ENCODE measurements at regions of chr4 and their contacts with region 1.

Region 1: DNA sequence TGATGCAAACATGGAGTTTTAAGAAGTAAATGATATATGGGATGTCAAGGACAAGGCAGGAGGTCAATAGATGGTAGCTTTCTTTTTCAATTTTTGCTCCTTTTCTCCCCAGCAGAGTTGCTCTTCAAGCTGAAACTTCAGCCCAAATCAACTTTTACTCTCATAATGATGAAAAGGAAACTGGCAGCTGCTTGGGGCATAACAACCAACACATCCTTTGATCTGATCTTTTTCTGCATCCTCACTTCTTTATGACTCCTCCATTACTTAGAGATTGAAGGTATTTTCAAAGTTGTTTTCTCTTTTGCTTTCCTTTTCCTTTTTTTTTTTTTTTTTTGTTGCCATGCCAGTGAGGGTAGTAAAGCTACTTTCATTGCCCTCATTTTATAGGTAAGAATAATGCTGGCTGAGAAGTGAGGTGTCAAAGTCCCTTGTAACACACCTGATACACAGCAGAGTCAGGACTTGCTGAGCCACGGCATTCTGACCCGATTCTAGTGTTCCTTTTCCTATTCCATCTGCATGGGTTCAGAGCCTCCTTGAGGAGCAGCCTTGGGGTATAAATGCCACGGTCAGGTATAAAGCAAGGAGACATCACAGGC is 26.9 kb downstream of the SLC2A9 start:
- DNase-seq: no peak
- ATAC-seq: no peak
- H3K4me3 ChIP-seq: no peak overlapping the region
- H3K27ac ChIP-seq: no peak overlapping the region
- H3K4me1 ChIP-seq: peaks cover 0 to 9% (median 0%) of the 10 kb centered on the region in 9 donors
- H3K27me3 ChIP-seq: no peaks in the 10 kb centered on the region
- CTCF ChIP-seq: no peak

Region 2: DNA sequence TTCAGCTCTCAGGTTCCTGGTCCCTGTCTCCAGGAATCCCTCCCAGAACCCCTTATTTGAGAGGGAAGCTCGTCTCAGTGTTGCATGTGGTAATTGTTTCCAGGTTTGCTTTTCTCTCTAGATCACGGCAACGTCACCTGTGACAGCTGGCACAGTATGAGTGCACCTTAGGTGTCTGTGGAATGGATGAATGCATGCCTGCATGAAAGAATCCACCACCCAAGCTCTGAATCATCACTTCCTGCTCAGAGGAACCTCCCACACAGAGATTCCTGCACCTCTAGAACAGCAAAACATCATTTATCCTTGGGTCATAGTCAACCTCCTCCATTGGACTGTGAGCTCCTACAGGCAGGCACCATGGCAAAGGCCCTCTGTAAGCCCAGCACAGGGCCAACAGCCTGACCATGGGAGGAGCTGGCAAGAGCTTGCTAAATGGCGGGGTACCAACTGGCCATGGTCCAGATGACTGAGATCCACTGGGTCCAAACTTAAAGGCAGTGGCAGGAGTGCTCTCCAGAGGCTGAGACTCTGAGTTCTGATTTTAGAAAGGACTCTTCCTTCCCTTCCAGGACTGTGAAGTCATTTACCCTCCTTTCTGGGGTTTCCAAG is 89.3 kb before region 1 on chr4:
- intact Hi-C with region 1: loop called in 1 of 10 experiments (anchors 5 kb)
- DNase-seq: peak; percentile 22 to 44
- ATAC-seq: peak in 5 of 8 donors; percentile 24 to 69 (median 51)
- H3K4me3 ChIP-seq: no peak overlapping the region
- H3K27ac ChIP-seq: no peak overlapping the region
- H3K4me1 ChIP-seq: peaks cover 0 to 10% (median 4%) of the 10 kb centered on the region in 9 donors
- H3K27me3 ChIP-seq: no peaks in the 10 kb centered on the region
- CTCF ChIP-seq: no peak

Region 3: DNA sequence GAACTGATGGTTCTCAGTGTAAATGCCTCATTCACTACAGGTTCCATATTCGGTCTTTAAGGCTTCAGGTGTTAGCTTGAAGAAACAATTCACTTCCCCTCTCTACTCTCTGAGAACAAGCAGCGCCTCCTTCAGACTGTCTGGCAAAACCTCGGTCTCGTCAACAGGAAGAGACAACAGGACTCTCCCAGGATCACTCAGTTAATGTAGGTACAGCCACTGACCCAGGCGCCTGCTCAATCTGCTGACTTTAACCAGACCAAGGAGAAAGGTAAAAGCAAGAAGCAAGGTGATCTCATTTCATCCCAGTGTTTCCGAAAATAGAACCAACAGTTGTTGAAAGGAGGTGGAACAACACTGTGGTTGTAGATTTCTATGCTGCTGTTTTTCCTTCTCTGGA is 75.3 kb before region 1 on chr4:
- intact Hi-C with region 1: loop called in 1 of 10 experiments (anchors 5 kb)
- DNase-seq: no peak
- ATAC-seq: peak in 5 of 8 donors; percentile 5 to 23 (median 12)
- H3K4me3 ChIP-seq: no peak overlapping the region
- H3K27ac ChIP-seq: peak overlapping the region in 3 of 10 donors; percentile 17 to 64 (median 34)
- H3K4me1 ChIP-seq: peaks cover 0 to 17% (median 0%) of the 10 kb centered on the region in 9 donors
- H3K27me3 ChIP-seq: no peaks in the 10 kb centered on the region
- CTCF ChIP-seq: no peak

Region 4: DNA sequence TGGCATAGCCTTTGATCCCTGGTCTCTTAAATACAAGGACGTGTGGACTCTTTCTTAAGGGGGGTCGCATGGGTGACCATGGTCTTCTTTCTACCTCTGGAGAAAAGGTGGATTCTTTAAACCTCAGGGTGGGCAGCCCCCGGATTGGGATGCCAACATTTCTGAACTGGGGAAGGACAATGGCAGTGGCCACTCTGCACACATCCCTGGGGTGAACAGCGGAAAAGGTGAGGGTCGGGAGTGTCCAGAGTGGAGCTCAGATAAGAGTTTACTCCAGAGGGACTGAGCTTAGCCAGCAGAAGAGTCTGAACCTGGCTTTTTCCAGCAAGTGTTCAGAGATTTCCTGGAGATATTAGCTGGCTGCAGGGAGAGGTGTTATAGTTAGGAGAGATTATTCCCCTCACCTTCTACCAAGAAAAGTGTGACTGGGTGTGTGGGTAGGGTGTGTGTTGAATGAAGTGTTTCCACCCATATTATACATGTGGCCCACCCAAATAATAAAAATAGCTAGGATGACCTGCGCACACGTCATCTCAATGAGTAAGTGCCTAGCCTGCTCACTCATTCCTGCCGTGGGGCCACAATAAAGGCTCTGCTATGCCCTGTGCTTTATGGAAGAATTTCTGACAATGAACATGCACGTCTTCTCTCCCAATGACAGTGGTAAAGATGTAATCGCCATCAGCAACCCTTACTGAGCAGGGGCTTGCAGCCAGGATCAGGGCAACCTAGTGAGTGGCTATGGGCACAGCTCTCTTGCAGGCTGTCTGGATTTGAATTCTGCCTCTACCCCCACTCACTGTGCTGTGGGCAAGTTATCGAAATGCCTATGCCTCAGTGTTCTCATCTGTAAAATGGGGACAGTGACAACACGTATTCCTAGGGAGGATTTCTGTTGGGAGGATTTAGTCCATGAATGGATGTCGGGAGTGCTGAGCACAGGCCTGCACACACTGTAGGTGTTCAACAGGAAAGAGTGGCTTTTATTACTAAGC is 49.6 kb before region 1 on chr4:
- intact Hi-C with region 1: loop called in 2 of 10 experiments (anchors 5 kb)
- DNase-seq: no peak
- ATAC-seq: no peak
- H3K4me3 ChIP-seq: no peak overlapping the region
- H3K27ac ChIP-seq: no peak overlapping the region
- H3K4me1 ChIP-seq: peaks cover 0 to 14% (median 10%) of the 10 kb centered on the region in 9 donors
- H3K27me3 ChIP-seq: no peaks in the 10 kb centered on the region
- CTCF ChIP-seq: no peak

Region 5: DNA sequence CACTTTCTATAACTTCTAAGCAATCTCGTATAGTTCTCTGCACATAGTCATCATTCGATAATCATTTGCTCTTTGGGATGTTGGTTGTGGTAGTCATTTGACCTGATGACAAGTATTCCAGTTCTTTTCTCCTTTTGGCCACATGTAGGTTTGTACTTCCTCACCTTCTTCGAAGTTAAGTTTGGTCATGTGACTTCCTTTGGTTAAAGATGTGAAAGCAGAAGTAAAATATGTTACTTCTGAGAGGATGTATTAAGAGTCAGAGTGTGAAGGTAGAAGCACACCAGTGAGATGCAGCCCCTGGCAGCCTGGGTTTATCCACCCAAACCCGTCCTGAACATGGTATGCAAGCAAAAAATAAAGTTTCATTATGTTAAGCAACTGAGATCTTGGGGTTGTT is 511.7 kb after region 1 on chr4:
- intact Hi-C with region 1: no loop called
- DNase-seq: no peak
- ATAC-seq: no peak
- H3K4me3 ChIP-seq: no peak overlapping the region
- H3K27ac ChIP-seq: no peak overlapping the region
- H3K4me1 ChIP-seq: no peaks in the 10 kb centered on the region
- H3K27me3 ChIP-seq: no peaks in the 10 kb centered on the region
- CTCF ChIP-seq: no peak

Measured in heart right ventricle (tissue), 16 donors.